ENCODE measurements at regions of chr17 and their contacts with region 1.

Region 1: DNA sequence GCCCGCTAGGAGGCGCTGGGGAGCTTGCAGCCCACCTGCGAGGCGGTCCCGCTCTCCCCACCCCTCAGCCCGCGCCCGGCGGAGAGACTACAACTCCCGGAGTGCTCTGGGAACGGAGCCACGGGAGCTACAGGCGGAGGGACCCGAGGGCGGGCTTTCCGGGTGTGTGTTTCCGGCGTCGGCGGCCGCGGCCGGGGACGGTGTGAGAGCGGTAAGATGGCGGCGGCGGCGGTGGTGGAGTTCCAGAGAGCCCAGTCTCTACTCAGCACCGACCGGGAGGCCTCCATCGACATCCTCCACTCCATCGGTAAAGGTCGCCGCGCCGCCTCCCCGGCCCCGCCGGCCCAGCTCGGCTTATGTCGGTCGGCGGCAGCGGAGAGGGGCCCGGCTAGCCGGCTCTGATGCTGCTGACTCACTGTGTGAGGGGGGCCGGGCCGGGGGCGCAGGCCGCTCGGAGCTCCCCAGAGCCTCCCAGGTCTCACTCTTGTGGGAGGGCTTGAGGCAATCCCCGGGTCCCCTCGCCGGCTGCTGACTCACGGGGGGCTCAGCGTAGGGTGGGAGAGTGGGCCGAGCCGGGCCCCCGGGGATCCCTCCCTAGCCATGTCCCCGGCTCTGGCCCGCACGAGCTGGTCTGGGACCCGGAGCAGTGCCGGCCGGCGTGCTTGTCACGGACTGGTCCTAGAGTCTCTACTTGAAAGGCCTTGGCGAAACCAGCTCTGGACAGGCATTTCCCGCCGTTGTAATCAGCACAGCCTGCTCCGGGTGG is at the start of gene PSMD11:
- DNase-seq: peak; percentile 99
- CTCF ChIP-seq: peak; percentile 89

Region 2: GRCh38 chr17:32398946-32399345 is 45.5 kb before region 1 on chr17:
- CTCF ChIA-PET with region 1: interaction called, 11 read pairs
- POLR2A ChIA-PET with region 1: interaction called, 4 read pairs
- DNase-seq: no peak
- CTCF ChIP-seq: no peak

Region 3: DNA sequence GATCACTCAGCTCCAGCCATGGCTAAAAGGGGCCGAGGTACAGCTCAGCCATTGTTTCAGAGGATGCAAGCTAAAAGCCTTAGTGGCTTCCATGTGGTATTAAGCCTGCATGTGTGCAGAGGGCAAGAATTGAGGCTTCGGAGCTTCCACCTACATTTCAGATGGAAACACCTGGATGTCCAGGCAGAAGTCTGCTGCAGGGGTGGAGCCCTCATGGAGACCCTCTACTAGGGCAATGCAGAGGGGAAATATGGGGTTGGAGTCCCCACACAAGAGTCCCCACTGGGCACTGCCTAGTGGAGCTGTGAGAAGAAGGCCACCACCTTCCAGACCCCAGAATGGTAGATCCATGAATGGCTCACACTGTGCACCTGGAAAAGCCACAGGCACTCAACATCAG is 14.9 kb before region 1 on chr17:
- CTCF ChIA-PET with region 1: interaction called, 17 read pairs
- POLR2A ChIA-PET with region 1: no interaction called
- DNase-seq: no peak
- CTCF ChIP-seq: no peak

Region 4: DNA sequence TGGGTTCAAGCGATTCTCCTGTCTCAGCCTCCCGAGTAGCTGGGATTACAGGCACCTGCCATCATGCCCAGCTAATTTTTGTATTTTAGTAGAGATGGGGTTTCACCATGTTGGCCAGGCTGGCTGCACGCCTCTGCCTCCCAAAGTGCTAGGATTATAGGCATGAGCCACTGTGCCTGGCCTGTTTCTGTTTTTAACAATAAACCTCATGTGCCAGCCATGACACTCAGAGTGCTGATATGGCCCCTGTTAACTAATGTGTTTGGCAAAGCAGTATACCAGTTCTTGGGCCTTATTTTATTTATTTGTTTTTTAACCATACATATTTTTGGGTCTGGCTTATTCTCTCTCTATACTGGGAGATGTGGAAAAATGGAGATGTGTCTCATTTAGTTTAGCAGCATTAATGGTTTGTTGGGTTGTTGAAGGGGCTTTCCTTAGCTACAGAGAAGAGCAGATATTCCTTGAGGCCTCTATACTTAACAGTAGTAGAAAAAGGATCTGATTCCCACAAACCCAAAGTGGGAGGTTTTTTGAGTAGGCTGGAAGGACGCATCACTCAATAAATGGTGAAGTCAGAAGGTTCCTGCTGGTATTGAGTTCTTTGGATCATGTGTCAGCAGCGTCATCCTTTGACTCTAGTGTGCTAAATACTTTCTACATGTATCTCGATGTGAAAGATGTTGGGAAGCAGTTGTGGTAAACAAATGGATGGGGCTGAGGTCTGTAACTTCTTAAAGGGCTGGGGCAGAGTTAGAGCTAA is 26.1 kb after region 1 on chr17:
- CTCF ChIA-PET with region 1: interaction called, 139 read pairs
- POLR2A ChIA-PET with region 1: no interaction called
- DNase-seq: no peak
- CTCF ChIP-seq: no peak

Measured in GM10248 (cell line).